Mammary epithelial cell (primary cell): ENCODE measurements at regions of chr4 and their contacts with region 1.

Region 1: GRCh38 chr4:37054531-37055077 is 189.9 kb upstream of the NWD2 start:
- DNase-seq: no peak
- H3K4me3 ChIP-seq: no peak overlapping the region
- H3K27ac ChIP-seq: no peak overlapping the region
- H3K4me1 ChIP-seq: no peaks in the 10 kb centered on the region
- H3K27me3 ChIP-seq: no peaks in the 10 kb centered on the region
- CTCF ChIP-seq: no peak

Region 2: DNA sequence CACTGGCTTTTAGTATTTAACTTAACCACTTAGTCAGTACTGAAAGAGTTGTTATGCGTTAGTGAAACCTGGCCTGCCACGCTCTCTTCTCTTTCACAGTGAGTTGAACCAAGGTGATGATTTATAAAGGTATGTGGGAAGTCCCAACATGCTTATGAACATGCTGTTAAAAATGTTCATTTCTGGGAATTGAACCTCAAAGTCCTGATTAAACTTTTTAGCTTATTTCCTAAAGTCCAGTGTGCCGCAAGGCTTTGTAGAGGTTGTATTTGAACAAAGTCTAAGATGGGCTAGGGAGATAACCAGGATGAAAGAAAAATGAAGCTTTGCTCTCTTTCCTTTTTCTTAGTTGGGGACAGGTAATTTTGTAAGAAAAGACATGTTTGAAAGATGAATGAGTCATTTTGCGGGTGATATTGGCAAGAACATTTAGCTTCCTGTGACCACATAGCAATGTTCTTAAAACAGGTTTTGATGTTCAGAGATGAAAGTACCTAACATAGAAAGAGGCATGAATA is 502.8 kb before region 1 on chr4:
- CTCF ChIA-PET with region 1: no interaction called
- dilution Hi-C with region 1: no loop called
- in situ Hi-C with region 1: no loop called
- intact Hi-C with region 1: no loop called
- DNase-seq: peak; percentile 82
- H3K4me3 ChIP-seq: peak overlapping the region in 1 of 3 experiments; percentile 13
- H3K27ac ChIP-seq: peak overlapping the region; percentile 74
- H3K4me1 ChIP-seq: peaks cover 7% of the 10 kb centered on the region
- H3K27me3 ChIP-seq: peaks cover under 1% of the 10 kb centered on the region
- CTCF ChIP-seq: no peak

Region 3: GRCh38 chr4:37040816-37041215 is 13.8 kb before region 1 on chr4:
- CTCF ChIA-PET with region 1: no interaction called
- dilution Hi-C with region 1: no loop called
- in situ Hi-C with region 1: no loop called
- intact Hi-C with region 1: loop called (anchors 1 kb)
- DNase-seq: no peak
- H3K4me3 ChIP-seq: no peak overlapping the region
- H3K27ac ChIP-seq: no peak overlapping the region
- H3K4me1 ChIP-seq: no peaks in the 10 kb centered on the region
- H3K27me3 ChIP-seq: no peaks in the 10 kb centered on the region
- CTCF ChIP-seq: no peak